ENCODE measurements at regions of chr19 and their contacts with region 1.

Region 1: DNA sequence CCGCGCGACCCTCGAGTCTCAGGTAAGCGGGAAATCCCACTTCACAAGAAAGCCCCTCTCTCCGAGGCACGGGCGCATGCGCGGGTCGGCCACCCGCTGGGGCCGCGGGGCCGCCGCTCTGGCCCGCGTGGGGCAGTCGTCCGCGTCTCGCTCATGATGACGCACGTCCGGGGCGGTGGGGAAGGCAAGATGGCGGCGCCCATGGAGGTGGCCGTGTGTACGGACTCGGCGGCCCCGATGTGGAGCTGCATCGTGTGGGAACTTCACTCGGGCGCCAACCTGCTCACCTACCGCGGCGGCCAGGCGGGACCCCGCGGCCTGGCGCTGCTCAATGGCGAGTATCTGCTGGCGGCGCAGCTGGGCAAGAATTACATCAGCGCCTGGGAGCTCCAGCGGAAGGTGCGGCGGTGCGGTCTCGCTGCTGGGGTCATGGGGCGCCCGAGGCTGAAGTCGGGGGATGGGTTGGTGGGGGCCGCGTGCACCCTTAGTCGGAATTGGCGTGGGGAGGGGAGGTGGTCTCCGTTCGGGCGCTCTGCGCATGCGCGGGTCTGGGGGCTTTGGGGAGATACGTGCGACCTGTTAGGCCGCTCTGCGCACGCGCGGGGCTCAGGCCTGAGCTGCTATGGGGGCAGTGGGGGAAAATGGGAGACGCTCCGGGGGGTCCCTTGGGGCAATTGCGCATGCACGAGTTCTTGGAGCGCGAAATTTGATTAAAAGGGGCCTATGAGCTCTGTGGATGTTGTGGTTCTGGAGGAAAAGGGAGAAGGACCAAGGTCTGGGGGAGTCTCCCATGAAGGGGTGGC is at the start of gene WDR18:
- DNase-seq: peak; percentile 73 to 94 (median 80)
- ATAC-seq: peak; percentile 86 to 89
- H3K4me3 Mint-ChIP-seq: peak within 1 kb of the TSS; percentile 87 to 99 (median 92)
- H3K27ac Mint-ChIP-seq: peak within 1 kb of the TSS; percentile 63 to 96 (median 92)
- H3K4me1 Mint-ChIP-seq: peaks cover 12 to 25% (median 20%) of the 10 kb centered on the region in 4 donors
- H3K27me3 Mint-ChIP-seq: no peaks in the 10 kb centered on the region
- polyA plus RNA-seq, gene WDR18: 51.2 to 72.7 (median 64.1) TPM

Region 2: DNA sequence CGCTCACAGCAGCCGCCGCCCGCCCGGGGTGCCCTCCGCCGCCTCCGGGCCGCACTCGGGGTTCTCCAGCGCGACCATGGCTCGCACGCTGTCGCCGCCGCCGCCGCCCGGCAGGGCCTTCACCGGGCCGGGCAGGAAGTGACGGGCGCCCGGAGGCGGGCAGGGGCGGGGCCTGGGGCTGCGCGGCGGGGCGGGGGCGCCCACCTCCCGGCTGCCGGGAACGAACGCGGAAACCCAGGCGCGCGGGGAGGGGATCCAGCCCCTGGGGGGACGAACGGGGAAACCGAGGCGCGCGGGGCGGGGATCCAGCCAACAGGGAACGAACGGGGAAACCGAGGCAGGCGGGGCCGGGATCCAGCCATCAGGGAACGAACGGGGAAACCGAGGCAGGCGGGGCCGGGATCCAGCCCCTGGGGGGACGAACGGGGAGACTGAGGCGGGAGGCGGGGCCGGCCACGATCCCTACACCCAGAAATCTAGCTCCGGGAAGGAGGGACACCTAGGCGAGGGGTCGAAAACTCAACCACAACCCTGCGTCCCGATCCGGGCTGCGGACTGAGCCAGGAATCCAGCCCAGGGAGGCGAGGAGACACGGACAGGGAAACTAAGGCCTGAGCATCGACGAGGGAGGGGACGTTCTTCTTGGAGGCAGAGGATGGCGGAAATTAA is 71.2 kb before region 1 on chr19 and contains the start of gene R3HDM4:
- POLR2A ChIA-PET with region 1: interaction called, 11 read pairs
- DNase-seq: peak; percentile 75 to 89 (median 82)
- ATAC-seq: peak; percentile 40 to 46
- H3K4me3 Mint-ChIP-seq: peak within 1 kb of the TSS; percentile 81 to 92 (median 85)
- H3K27ac Mint-ChIP-seq: peak within 1 kb of the TSS; percentile 80 to 98 (median 94)
- H3K4me1 Mint-ChIP-seq: peaks cover 15 to 41% (median 31%) of the 10 kb centered on the region in 4 donors
- H3K27me3 Mint-ChIP-seq: peaks cover 0 to 2% (median 0%) of the 10 kb centered on the region in 5 donors
- polyA plus RNA-seq, gene R3HDM4: 137 to 238 (median 182) TPM

Region 3: GRCh38 chr19:937259-937694 is 47.1 kb before region 1 on chr19:
- POLR2A ChIA-PET with region 1: interaction called, 12 read pairs
- DNase-seq: peak in 8 of 10 donors; percentile 50 to 85 (median 72)
- ATAC-seq: peak; percentile 59 to 63
- H3K4me3 Mint-ChIP-seq: peak overlapping the region; percentile 15 to 73 (median 60)
- H3K27ac Mint-ChIP-seq: peak overlapping the region; percentile 65 to 98 (median 88)
- H3K4me1 Mint-ChIP-seq: peaks cover 21 to 58% (median 53%) of the 10 kb centered on the region in 4 donors
- H3K27me3 Mint-ChIP-seq: no peaks in the 10 kb centered on the region

Region 4: DNA sequence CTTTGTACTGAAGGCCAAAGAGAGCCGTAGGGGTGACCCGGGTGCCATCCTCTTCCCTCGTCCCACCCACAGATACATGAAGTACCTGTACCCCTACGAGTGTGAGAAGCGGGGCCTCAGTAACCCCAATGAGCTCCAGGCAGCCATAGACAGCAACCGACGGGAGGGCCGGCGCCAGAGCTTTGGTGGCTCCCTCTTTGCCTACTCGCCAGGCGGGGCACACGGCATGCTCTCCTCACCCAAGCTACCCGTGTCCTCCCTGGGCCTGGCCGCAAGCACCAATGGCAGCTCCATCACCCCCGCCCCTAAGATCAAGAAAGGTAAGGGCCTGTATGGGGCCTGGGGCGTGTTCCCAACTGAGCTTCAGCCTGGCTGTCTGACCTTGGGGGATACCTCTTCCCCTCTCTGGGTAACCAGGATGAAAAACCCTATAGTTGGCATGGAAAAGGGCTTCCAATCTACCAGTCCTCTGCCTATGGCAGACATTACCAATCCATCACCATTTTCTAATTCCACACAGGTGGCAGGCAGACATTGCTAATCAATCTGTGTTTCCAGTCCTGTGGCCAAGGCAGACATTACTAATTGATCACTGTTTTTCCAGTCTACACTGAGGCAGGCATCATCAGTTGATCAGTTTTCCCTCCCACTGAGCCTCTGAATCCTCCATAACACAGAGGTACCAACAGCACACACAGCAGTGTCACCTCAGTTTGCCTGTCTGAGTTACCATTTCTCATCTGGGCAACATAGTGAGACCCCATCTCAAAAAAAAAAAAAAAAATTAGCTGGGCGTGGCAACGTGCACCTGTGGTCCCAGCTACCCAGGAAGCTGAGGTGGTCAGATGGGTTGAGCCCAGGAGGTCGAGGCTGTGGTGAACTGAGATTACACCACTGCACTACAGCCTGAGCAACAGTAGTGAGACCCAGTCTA is 19.3 kb before region 1 on chr19:
- POLR2A ChIA-PET with region 1: no interaction called
- DNase-seq: no peak
- ATAC-seq: no peak
- H3K4me3 Mint-ChIP-seq: no peak overlapping the region
- H3K27ac Mint-ChIP-seq: no peak overlapping the region
- H3K4me1 Mint-ChIP-seq: no peaks in the 10 kb centered on the region
- H3K27me3 Mint-ChIP-seq: no peaks in the 10 kb centered on the region

Region 5: GRCh38 chr19:1020868-1021425 is 36.6 kb after region 1 on chr19 and contains the start of gene TMEM259:
- POLR2A ChIA-PET with region 1: interaction called, 23 read pairs
- DNase-seq: peak in 9 of 10 donors; percentile 94 to 99 (median 97)
- ATAC-seq: peak; percentile 84 to 86
- H3K4me3 Mint-ChIP-seq: peak within 1 kb of the TSS; percentile 86 to 94 (median 91)
- H3K27ac Mint-ChIP-seq: peak within 1 kb of the TSS; percentile 96 to 100 (median 99)
- H3K4me1 Mint-ChIP-seq: peaks cover 18 to 53% (median 47%) of the 10 kb centered on the region in 4 donors
- H3K27me3 Mint-ChIP-seq: peaks cover 0 to 6% (median 0%) of the 10 kb centered on the region in 5 donors
- polyA plus RNA-seq, gene TMEM259: 37.9 to 77.0 (median 52.0) TPM

Region 6: DNA sequence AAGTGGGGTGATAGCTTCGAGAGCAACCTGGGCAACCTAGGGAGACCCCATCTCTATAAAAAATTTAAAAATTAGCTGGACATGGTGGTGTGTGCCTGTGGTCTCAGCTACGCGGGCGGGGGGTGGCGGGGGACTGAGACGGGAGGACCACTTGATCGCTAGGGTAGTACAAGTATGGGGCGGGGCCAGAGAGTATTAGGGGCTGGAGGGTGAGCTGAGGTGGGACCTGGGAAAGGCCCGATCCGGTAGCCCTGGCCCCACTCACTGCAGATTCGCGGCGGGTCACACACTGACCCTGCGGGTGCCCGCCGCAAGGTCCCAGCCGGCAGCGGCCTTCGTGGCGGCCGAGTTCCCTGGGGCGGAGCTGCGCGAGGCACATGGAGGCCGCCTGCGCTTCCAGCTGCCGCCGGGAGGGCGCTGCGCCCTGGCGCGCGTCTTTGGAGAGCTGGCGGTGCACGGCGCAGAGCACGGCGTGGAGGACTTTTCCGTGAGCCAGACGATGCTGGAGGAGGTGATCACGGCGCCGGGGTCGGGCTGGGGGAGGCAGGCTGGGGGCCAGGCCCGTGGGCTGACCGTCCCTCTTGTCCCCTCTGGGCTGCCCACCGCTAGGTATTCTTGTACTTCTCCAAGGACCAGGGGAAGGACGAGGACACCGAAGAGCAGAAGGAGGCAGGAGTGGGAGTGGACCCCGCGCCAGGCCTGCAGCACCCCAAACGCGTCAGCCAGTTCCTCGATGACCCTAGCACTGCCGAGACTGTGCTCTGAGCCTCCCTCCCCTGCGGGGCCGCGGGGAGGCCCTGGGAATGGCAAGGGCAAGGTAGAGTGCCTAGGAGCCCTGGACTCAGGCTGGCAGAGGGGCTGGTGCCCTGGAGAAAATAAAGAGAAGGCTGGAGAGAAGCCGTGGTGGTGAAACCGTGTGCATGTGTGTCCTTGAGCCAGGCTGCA is 80.6 kb after region 1 on chr19:
- POLR2A ChIA-PET with region 1: interaction called, 10 read pairs
- DNase-seq: peak in 9 of 10 donors; percentile 59 to 78 (median 68)
- ATAC-seq: peak; percentile 21 to 30
- H3K4me3 Mint-ChIP-seq: peak overlapping the region; percentile 40 to 92 (median 74)
- H3K27ac Mint-ChIP-seq: peak overlapping the region in 9 of 10 donors; percentile 76 to 94 (median 91)
- H3K4me1 Mint-ChIP-seq: peaks cover 16 to 46% (median 34%) of the 10 kb centered on the region in 4 donors
- H3K27me3 Mint-ChIP-seq: no peaks in the 10 kb centered on the region

Region 7: DNA sequence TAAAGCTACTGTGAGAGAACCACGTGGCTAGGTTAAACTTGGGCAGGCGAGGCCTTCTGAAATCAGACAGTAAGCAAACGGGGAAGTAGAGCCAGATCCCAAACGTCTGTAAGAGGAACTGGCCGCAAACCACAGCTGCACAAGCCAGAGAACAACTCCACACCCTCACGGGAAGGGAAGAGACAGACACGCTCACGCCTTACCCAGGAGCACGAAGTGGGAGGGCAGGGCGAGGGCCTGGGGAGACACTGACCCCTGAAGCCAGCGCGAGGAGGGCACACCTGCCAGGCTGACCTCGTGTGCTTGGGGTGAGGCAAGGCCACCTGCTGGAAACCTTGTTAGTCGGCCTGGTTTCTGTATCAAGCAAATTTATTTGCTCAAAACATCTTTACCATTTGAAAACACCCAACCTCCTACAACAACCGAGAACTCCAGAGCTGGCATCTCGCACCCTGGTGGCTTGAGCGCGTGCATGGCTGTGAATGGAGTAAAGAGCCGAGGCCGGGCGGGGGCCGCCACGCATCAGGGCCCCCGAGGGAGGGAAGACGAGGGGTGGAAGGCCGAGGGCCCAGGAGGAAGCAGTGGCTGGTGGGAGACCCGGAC is 103.5 kb after region 1 on chr19:
- POLR2A ChIA-PET with region 1: interaction called, 17 read pairs
- DNase-seq: peak in 8 of 10 donors; percentile 31 to 79 (median 62)
- ATAC-seq: peak; percentile 26 to 34
- H3K4me3 Mint-ChIP-seq: peak overlapping the region; percentile 54 to 79 (median 74)
- H3K27ac Mint-ChIP-seq: peak overlapping the region; percentile 86 to 98 (median 95)
- H3K4me1 Mint-ChIP-seq: peaks cover 22 to 70% (median 62%) of the 10 kb centered on the region in 4 donors
- H3K27me3 Mint-ChIP-seq: no peaks in the 10 kb centered on the region

Measured in naive thymus-derived CD8-positive, alpha-beta T cell (primary cell).